ENCODE measurements at regions of chr1 and their contacts with region 1.

Region 1: DNA sequence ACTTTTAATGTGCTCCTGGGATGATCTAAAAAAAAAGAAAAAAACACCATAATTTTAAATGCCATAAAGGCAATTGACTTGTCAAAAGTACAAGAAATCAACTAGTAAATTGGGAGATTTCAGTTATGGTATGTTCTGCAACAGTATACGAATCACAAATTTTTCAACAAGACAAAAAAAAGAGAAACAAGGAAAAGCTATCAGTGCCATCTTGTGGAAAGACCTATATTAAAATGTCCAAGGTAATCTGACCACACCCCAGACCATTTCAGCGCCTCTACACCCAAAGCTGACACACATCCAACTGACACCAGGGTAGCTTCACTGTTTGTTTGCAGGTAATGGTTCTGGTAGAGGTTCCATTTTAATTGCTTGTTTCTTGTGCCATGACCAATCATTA is 5.0 kb upstream of the DUSP23 start:
- DNase-seq: no peak
- H3K4me3 ChIP-seq: no peak overlapping the region
- CTCF ChIP-seq: no peak

Region 2: DNA sequence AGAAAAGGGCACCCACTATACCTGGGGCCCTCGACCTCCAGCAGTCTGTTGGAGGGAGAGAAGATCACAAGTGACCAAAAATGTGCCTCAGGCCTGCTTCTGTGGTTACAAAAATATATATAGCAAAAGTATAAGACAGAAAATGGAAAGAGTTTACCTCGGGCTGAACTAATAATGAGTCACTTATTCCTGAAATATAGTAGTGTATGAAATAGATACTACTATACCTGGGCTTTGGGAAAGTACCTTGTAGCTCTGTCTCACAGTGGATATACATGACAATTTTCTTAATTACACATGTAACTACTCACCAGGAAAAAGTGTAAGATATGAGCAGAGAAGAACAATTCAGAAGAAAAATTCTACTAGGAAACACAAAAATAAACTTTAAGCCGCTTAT is 195.4 kb before region 1 on chr1:
- CTCF ChIA-PET with region 1: no interaction called
- POLR2A ChIA-PET with region 1: no interaction called
- DNase-seq: no peak
- H3K4me3 ChIP-seq: no peak overlapping the region
- CTCF ChIP-seq: no peak

Region 3: GRCh38 chr1:159678939-159679338 is 96.8 kb before region 1 on chr1:
- CTCF ChIA-PET with region 1: no interaction called
- POLR2A ChIA-PET with region 1: no interaction called
- DNase-seq: no peak
- H3K4me3 ChIP-seq: no peak overlapping the region
- CTCF ChIP-seq: no peak

Region 4: DNA sequence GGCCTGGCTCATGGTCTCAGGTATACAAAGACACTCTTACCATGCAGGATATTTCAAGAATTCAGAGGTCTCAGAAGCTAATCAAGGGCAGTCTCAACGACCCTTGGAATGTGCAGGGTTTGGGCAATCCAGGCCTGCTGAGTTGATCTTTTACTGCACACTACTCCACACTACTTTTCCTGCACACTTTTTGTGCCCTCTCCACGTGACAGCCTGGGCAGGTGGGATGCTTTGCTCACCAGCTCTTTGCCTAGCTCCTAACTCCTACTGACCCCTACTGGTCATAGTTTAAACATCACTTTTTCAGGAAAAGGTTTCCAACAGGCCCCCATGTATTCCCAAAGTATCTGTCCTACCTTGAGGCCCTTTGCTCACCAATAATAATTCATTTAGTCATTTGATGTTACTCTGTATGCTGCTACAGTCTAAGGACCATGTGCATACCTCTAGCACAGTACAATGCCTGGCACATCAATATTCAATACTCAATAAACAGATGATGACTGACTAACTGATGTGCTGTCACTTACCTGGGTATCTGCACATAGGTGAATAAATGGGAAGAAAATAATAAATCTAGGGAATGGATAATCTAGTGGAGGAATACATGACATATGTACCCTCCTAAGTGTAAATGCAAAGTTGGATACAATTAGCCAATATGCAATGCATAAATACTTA is 14.7 kb after region 1 on chr1:
- CTCF ChIA-PET with region 1: interaction called, 13 read pairs
- POLR2A ChIA-PET with region 1: no interaction called
- DNase-seq: no peak
- H3K4me3 ChIP-seq: no peak overlapping the region
- CTCF ChIP-seq: peak; percentile 31

Measured in AG04449 (cell line).